AG04450 (cell line): ENCODE measurements at regions of chr17 and their contacts with region 1.

Region 1: DNA sequence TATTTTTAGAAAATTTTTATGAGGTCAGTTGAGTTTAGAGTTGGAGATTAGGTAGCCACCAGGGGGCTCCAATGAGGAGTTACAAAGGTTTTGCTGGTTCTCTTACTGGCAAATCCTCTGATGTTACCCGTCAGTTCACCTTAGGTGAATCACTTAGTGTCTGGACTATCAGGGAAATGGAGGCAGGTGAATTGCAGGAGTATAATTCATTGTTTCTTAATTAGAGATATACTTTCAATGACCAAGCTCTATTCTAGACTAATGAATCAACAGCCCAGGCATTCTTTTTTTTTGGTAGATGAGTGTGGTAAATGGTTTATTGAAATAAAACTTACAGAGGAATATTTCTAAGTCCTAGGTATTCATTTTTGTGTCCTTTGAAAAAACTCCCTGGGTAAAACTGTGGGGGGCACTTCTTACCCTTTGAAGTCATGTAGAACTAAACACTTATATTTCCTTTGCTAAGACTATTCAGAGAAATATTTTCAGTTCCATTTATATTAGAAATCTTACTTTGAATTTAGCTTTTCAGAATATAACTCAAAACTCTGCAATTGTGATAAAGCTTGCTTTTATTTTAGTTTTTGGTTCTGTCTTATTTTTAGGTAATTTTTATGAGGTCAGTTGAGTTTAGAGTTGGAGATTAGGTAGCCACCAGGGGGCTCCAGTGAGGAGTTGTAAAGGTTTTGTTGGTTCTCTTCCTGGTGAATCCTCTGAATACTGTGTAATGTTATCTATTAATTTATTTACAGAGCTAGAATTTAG is 17.7 kb downstream of the PSMD11 start:
- DNase-seq: no peak
- H3K4me3 ChIP-seq: no peak overlapping the region
- H3K27ac ChIP-seq: no peak overlapping the region
- H3K27me3 ChIP-seq: no peaks in the 10 kb centered on the region
- CTCF ChIP-seq: peak; percentile 69

Region 2: DNA sequence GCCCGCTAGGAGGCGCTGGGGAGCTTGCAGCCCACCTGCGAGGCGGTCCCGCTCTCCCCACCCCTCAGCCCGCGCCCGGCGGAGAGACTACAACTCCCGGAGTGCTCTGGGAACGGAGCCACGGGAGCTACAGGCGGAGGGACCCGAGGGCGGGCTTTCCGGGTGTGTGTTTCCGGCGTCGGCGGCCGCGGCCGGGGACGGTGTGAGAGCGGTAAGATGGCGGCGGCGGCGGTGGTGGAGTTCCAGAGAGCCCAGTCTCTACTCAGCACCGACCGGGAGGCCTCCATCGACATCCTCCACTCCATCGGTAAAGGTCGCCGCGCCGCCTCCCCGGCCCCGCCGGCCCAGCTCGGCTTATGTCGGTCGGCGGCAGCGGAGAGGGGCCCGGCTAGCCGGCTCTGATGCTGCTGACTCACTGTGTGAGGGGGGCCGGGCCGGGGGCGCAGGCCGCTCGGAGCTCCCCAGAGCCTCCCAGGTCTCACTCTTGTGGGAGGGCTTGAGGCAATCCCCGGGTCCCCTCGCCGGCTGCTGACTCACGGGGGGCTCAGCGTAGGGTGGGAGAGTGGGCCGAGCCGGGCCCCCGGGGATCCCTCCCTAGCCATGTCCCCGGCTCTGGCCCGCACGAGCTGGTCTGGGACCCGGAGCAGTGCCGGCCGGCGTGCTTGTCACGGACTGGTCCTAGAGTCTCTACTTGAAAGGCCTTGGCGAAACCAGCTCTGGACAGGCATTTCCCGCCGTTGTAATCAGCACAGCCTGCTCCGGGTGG is 17.5 kb before region 1 on chr17 and contains the start of gene PSMD11:
- CTCF ChIA-PET with region 1: interaction called, 132 read pairs
- POLR2A ChIA-PET with region 1: no interaction called
- DNase-seq: peak; percentile 88
- H3K4me3 ChIP-seq: peak within 1 kb of the TSS; percentile 92
- H3K27ac ChIP-seq: peak within 1 kb of the TSS; percentile 89
- H3K27me3 ChIP-seq: peaks cover 7% of the 10 kb centered on the region
- CTCF ChIP-seq: peak; percentile 86
- polyA plus RNA-seq, gene PSMD11: 85.0 and 99.0 TPM in 2 replicates

Region 3: GRCh38 chr17:32477220-32477619 is 15.2 kb after region 1 on chr17:
- CTCF ChIA-PET with region 1: interaction called, 77 read pairs
- POLR2A ChIA-PET with region 1: no interaction called
- DNase-seq: no peak
- H3K4me3 ChIP-seq: no peak overlapping the region
- H3K27ac ChIP-seq: no peak overlapping the region
- H3K27me3 ChIP-seq: no peaks in the 10 kb centered on the region
- CTCF ChIP-seq: no peak

Region 4: DNA sequence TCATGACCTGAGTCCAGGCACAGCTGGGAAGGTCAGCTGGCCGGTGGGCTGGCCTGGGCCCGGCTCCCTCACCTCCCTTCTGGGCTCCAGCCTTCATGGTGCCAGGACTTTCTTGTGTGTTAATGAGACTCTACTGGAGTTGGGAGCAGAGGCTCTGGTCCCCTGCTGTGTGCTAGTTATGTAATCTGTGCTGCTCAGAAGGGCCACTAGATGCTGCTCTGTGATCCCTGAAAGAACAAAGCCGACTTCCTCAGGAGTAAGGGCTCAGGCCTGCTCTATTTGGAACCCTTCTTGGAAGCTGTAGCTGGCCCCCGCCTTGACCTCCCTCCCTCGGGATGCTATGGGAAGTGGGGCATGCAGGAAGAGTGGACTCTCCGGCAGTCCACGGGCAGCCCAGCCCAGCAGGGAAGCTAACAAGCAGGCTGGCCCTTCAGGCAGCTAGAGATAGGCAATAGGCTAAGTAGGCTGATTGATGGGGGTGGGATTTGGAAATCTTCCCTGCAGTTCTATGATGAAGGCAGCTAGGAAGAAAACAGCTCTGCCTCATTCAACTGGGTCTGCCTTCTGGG is 21.5 kb after region 1 on chr17:
- CTCF ChIA-PET with region 1: interaction called, 74 read pairs
- POLR2A ChIA-PET with region 1: no interaction called
- DNase-seq: no peak
- H3K4me3 ChIP-seq: no peak overlapping the region
- H3K27ac ChIP-seq: peak overlapping the region; percentile 61
- H3K27me3 ChIP-seq: no peaks in the 10 kb centered on the region
- CTCF ChIP-seq: peak; percentile 60

Region 5: GRCh38 chr17:32723310-32723955 is 261.4 kb after region 1 on chr17:
- CTCF ChIA-PET with region 1: no interaction called
- POLR2A ChIA-PET with region 1: no interaction called
- DNase-seq: no peak
- H3K4me3 ChIP-seq: no peak overlapping the region
- H3K27ac ChIP-seq: no peak overlapping the region
- H3K27me3 ChIP-seq: no peaks in the 10 kb centered on the region
- CTCF ChIP-seq: no peak

Region 6: GRCh38 chr17:32746698-32747097 is 284.7 kb after region 1 on chr17:
- CTCF ChIA-PET with region 1: interaction called, 11 read pairs
- POLR2A ChIA-PET with region 1: no interaction called
- DNase-seq: no peak
- H3K4me3 ChIP-seq: no peak overlapping the region
- H3K27ac ChIP-seq: no peak overlapping the region
- H3K27me3 ChIP-seq: no peaks in the 10 kb centered on the region
- CTCF ChIP-seq: no peak

Region 7: DNA sequence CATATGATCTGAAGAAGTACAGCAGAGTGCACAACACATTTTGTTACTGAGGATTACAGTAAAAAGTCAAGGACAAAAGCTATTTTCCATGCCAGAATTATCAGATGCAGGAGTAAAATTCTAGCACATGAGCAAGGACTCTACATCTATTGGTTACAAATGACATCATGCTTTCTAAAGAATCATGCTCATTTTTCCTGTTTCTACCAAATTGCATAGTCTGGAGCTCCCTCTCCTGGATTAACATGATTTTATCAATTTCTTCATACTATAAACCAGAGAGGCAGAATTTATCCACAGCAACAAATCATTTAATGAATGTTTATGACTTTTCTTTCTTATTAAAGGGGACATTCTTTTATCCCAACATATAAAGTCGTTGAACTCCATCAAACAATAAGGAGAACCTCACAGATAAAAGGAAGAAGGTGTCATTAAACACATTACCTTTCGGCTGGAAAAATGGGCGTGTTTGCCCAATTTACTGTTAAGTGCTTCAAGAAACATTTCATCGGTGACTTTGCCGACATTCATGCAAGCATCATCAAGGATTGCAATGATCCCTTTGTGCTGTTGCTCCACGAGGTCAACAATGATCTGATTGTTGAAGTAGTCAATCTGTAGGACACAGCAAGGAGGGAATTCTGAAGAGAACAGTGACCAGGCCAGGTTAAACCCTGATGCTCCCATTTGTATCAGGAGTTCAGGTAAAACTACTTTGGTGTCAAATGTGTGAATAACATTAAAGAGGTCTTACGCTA is 293.2 kb after region 1 on chr17:
- CTCF ChIA-PET with region 1: interaction called, 37 read pairs
- POLR2A ChIA-PET with region 1: no interaction called
- DNase-seq: peak; percentile 18
- H3K4me3 ChIP-seq: no peak overlapping the region
- H3K27ac ChIP-seq: no peak overlapping the region
- H3K27me3 ChIP-seq: no peaks in the 10 kb centered on the region
- CTCF ChIP-seq: peak; percentile 36

Region 8: DNA sequence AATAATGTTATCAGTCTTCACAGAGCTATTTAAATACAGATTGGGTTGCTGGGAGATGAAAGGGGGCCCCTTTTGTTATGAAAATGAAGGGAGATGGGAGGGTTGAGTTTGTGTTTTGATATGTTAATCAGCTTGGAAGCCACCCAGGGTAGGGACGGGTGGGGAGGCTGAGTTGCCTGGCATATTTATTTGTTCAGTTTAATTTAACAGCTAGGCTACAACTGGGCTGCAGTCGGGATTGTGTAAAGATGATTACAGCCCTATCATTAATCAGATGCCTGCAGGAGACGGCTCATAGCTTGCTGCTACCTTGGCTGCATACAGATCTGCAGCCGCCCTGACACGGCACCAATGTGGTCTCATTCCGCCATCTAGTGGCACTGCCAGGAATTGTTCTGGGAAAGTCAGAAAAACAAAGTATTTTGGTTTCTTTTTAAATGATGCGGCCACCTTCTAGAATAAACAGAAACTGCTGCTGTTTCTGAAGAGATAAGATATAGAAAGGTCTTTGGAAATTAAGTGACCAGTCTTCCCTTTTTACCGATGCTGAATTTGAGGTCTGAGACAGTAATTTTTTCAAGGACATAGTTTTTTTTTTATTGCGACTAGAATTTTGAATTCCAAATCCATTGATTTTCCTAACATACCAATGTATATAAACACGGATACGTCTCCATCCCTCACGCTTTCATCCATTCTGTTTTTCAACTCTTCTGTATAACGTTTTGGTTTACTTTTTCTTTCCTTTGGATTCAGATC is 1289.1 kb after region 1 on chr17:
- CTCF ChIA-PET with region 1: interaction called, 14 read pairs
- POLR2A ChIA-PET with region 1: no interaction called
- DNase-seq: peak; percentile 26
- H3K4me3 ChIP-seq: peak overlapping the region; percentile 31; the same call in 1 of the 2 replicates
- H3K27ac ChIP-seq: no peak overlapping the region
- H3K27me3 ChIP-seq: no peaks in the 10 kb centered on the region
- CTCF ChIP-seq: peak; percentile 86